Transverse colon (tissue), 4 donors: ENCODE measurements at regions of chr12 and their contacts with region 1.

Region 1: DNA sequence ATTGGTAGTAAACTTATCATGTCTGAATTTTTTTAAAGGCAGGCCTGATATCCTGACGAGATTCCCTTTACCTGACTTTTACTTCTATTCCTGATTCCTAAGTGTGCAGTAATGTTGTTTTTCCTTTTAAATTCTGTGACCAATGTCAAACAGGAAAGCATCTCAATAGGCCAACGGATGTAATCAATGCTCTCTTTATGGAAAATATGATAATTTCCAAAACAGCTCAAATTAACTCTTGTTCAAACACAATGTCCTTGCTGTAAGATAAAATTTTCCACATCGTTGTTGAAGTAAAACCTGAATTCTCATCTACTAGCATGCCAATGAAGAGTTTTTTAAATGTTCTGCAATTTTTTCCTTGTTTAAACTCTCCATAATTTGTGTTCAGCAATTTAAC is 8.0 kb upstream of the TAS2R31 start:
- DNase-seq: no peak
- H3K4me3 ChIP-seq: no peak overlapping the region
- H3K27ac ChIP-seq: no peak overlapping the region
- H3K4me1 ChIP-seq: no peaks in the 10 kb centered on the region
- H3K27me3 ChIP-seq: no peaks in the 10 kb centered on the region
- CTCF ChIP-seq: no peak
- EP300 ChIP-seq: no peak
- POLR2A ChIP-seq: no peak

Region 2: GRCh38 chr12:11092128-11092527 is 53.0 kb after region 1 on chr12 and contains the start of gene TAS2R43:
- in situ Hi-C with region 1: loop called in 1 of 4 experiments (anchors 10 kb)
- intact Hi-C with region 1: loop called (anchors 2 kb)
- DNase-seq: no peak
- H3K4me3 ChIP-seq: no peak within 1 kb of the TSS
- H3K27ac ChIP-seq: no peak within 1 kb of the TSS
- H3K4me1 ChIP-seq: no peaks in the 10 kb centered on the region
- H3K27me3 ChIP-seq: no peaks in the 10 kb centered on the region
- CTCF ChIP-seq: no peak
- EP300 ChIP-seq: no peak
- POLR2A ChIP-seq: no peak
- total RNA-seq, gene TAS2R43: 2.5 to 5.6 (median 5.1) TPM in 3 of 4 donors, not detected in the other